ENCODE measurements at regions of chr17 and their contacts with region 1.

Region 1: DNA sequence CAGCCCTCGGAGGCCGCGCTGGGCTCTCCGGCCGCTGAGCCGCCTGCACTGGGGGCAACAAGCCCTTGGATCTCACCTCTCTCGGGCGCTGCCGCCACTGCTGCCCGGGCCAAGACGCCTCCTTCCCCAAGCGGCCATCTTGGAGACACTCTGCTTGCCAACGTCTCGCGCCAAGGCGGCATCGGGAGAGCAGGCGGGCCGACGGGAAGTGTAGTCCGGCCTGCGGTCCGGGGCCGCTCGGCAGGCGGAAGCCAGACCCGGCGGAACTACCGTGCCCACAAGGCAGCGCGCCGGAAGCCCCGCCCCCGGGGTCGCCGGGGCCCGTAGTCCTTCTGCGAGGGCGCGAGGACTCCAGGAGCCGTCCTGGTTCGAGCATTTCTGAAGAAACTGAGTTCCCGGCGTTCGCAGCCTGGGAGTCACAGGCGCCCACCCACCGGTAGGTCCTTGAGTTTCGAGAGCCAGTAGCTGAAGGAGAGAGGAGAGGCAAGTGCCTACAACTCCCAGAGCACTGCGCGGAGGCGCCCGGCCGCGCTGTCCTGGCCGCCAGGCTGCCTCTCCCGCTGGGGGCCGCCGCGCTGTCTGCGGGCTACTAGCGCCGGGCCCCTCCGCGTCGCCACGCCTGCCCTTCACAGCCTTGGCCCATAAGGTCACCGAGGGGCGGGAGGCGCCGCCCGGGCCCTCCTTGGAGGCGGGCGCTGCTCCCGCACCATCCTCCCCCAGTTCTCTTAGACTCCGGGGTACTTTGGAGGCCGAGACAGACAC is at the start of gene TMEM11:
- DNase-seq: peak; percentile 98 to 99
- ATAC-seq: peak; percentile 99
- H3K4me3 ChIP-seq: peak within 1 kb of the TSS; percentile 60 to 78
- H3K27ac ChIP-seq: peak within 1 kb of the TSS; percentile 45 to 57
- H3K4me1 ChIP-seq: no peaks in the 10 kb centered on the region
- H3K27me3 ChIP-seq: no peaks in the 10 kb centered on the region
- total RNA-seq, gene TMEM11: 16.8 to 17.7 TPM

Region 2: GRCh38 chr17:21161498-21162393 is 52.5 kb before region 1 on chr17:
- intact Hi-C with region 1: loop called in 1 of 2 experiments (anchors 10 kb)
- DNase-seq: no peak
- ATAC-seq: peak; percentile 36
- H3K4me3 ChIP-seq: no peak overlapping the region
- H3K27ac ChIP-seq: peak overlapping the region; percentile 45 to 71
- H3K4me1 ChIP-seq: no peaks in the 10 kb centered on the region
- H3K27me3 ChIP-seq: no peaks in the 10 kb centered on the region

Region 3: GRCh38 chr17:21171309-21171922 is 42.8 kb before region 1 on chr17:
- intact Hi-C with region 1: loop called (anchors 5 to 10 kb)
- DNase-seq: no peak
- ATAC-seq: no peak
- H3K4me3 ChIP-seq: no peak overlapping the region
- H3K27ac ChIP-seq: no peak overlapping the region
- H3K4me1 ChIP-seq: no peaks in the 10 kb centered on the region
- H3K27me3 ChIP-seq: no peaks in the 10 kb centered on the region

Region 4: DNA sequence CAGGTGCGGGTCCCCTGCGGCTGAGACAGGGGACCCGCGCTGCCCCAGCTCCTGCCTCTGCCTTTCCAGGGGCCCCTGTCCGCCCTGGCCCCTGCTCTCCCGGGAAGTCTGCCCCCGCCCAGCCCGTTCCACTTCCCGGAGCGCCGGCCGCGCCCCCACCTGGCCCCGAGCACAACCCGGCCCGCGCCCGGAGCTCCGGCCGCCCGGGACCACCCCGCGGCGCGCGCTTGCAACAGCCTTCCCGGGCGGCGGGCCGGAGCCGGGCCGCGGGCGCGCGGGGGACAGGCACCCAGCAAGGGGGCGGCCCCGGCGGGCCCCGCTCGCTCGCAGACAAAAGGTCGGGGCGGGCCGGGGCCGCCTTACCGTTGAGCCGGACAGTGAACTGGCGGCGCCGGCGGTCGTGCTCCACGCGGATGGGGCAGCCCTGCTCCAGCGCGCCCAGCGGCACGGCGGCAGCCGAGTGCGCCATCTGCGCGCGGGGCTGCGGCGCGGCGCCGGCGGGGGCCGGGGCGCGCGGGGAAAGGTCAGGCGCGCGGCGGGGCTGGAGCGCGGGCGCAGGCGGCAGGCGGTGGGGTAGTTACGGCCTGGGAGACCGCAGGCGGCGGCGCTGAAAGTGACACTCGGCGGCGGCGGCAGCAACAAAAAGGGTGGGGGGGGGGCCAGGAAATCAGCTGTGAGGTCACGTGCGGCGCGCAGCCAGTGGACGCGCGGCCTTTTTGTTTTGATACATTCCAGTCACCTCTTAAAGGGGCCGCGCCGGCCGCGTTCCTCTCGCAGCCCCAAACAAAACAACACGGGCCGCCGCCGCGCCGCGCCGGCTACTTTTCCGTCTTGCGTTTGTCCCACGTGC is 38.8 kb after region 1 on chr17 and contains the start of gene NATD1:
- intact Hi-C with region 1: loop called (anchors 2 to 5 kb)
- DNase-seq: peak; percentile 94
- ATAC-seq: peak; percentile 81
- H3K4me3 ChIP-seq: peak within 1 kb of the TSS; percentile 86 to 95
- H3K27ac ChIP-seq: peak within 1 kb of the TSS in 1 of 2 donors; percentile 72
- H3K4me1 ChIP-seq: peaks cover 0 to 3% of the 10 kb centered on the region in 2 donors
- H3K27me3 ChIP-seq: no peaks in the 10 kb centered on the region
- total RNA-seq, gene NATD1: 7.2 to 13.4 TPM

Region 5: GRCh38 chr17:21284319-21285163 is 70.3 kb after region 1 on chr17 and contains the start of gene MAP2K3:
- intact Hi-C with region 1: loop called in 1 of 2 experiments (anchors 2 kb)
- DNase-seq: peak; percentile 100
- ATAC-seq: peak; percentile 90
- H3K4me3 ChIP-seq: peak within 1 kb of the TSS; percentile 70 to 85
- H3K27ac ChIP-seq: peak within 1 kb of the TSS; percentile 63 to 94
- H3K4me1 ChIP-seq: peaks cover 3 to 8% of the 10 kb centered on the region in 2 donors
- H3K27me3 ChIP-seq: no peaks in the 10 kb centered on the region
- total RNA-seq, gene MAP2K3: 58.7 to 82.6 TPM

Region 6: GRCh38 chr17:22310717-22311686 is 1096.8 kb after region 1 on chr17:
- intact Hi-C with region 1: no loop called
- DNase-seq: no peak
- ATAC-seq: no peak
- H3K4me3 ChIP-seq: no peak overlapping the region
- H3K27ac ChIP-seq: no peak overlapping the region
- H3K4me1 ChIP-seq: no peaks in the 10 kb centered on the region
- H3K27me3 ChIP-seq: no peaks in the 10 kb centered on the region

Measured in aorta (tissue), 5 donors.